Prostate gland (tissue), 2 donors: ENCODE measurements at regions of chr13 and their contacts with region 1.

Region 1: GRCh38 chr13:49858183-49858856 is 65.8 kb upstream of the KPNA3 start:
- DNase-seq: peak; percentile 36
- H3K4me3 ChIP-seq: no peak overlapping the region
- H3K27ac ChIP-seq: peak overlapping the region; percentile 50 to 73
- H3K4me1 ChIP-seq: peaks cover 7% of the 10 kb centered on the region
- H3K27me3 ChIP-seq: no peaks in the 10 kb centered on the region
- CTCF ChIP-seq: no peak
- POLR2A ChIP-seq: no peak

Region 2: GRCh38 chr13:49560270-49561050 is 297.9 kb before region 1 on chr13:
- intact Hi-C with region 1: no loop called
- DNase-seq: peak; percentile 73
- H3K4me3 ChIP-seq: no peak overlapping the region
- H3K27ac ChIP-seq: peak overlapping the region; percentile 19 to 60
- H3K4me1 ChIP-seq: no peaks in the 10 kb centered on the region
- H3K27me3 ChIP-seq: no peaks in the 10 kb centered on the region
- CTCF ChIP-seq: peak in 2 of 4 experiments; percentile 26 to 35
- POLR2A ChIP-seq: no peak

Region 3: GRCh38 chr13:49828458-49828857 is 29.9 kb before region 1 on chr13:
- intact Hi-C with region 1: no loop called
- DNase-seq: no peak
- H3K4me3 ChIP-seq: no peak overlapping the region
- H3K27ac ChIP-seq: no peak overlapping the region
- H3K4me1 ChIP-seq: no peaks in the 10 kb centered on the region
- H3K27me3 ChIP-seq: no peaks in the 10 kb centered on the region
- CTCF ChIP-seq: no peak
- POLR2A ChIP-seq: no peak

Region 4: DNA sequence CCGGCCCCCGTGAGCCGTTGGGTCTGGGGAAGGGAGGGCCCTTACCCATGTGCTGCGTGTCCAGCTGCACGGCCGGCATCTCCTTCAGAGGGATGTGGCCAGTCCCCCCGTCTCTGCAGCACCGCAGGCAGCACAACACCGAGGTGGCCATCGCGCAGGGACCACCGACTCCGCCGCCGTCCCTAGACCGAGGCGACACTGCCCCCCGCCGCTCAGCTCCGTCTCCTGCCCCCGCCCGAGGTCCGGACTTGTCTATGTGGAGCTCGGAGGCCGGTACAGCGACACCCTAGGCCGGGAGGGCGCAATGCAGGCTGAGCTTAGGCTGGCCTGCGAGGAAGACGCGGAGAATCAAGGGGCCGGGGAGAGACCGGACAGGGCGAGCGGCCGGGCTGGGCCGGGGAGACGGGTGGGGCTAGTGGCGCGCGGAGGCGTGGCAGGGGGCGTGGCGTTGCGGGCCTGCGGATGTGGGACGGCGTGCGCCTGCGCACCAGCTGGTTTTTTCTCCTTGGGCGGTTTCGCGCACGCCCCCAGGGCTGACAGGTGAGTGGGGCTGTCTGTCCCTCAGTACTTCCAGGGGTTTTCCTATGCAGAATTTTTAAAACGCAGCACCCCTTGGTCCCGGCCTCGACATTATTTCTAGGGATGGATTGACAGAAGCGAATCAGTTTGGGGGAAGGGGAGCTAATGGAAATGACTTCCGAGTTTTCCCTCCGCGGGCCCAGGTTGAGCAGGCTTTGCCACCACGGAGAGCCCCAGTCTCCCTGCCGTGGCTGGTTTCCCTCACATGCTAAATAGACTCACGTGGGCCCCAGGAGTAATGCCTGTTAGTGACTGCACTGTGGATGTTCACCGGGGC is 78.0 kb after region 1 on chr13 and contains the start of gene SPRYD7:
- intact Hi-C with region 1: loop called (anchors 10 kb)
- DNase-seq: peak; percentile 97
- H3K4me3 ChIP-seq: peak within 1 kb of the TSS; percentile 65 to 92
- H3K27ac ChIP-seq: peak within 1 kb of the TSS; percentile 78 to 90
- H3K4me1 ChIP-seq: no peaks in the 10 kb centered on the region
- H3K27me3 ChIP-seq: no peaks in the 10 kb centered on the region
- CTCF ChIP-seq: peak; percentile 62 to 97 (median 90)
- POLR2A ChIP-seq: no peak
- total RNA-seq, gene SPRYD7: 6.9 to 8.4 TPM